ENCODE measurements at regions of chr3 and their contacts with region 1.

Region 1: DNA sequence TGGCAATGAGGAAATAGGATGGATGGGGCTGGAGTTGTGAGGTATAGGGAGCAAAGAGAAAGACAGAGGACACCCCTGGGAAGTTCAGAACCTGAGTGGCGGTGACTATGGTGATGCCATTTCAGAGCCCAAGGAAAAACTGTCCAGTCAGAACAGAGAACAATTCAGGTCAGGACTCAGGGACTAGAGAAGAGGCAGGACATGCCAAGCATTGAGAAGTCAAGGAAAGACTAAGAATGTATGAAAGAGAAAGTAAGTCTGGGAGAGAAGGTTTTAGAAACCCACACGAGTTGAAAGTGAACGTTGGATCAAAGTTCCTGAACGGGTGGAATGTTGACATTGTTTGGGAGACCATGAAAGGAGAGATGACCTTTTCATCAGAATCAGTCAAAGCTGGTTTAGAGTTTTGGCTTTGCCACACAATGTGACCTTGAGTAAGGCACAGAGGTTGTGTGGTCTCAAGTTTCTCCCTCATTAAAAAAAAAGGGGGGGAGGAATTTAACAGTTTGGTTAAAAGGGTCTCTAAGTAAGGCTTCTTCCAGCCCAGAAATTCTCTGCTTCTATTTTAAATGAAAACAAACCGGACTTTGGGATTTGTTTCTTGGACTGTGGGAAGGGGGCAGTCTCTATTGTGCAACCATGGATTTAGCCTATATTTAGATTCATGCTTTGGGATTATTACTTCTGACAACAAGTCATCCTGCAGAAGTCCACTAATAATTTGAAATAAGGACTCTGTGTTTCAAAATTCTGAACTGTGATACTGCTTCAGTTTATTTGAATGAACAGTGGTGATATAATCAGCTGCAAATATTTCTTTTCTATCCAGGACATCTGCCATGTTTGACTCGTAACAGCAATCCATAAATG is 315.9 kb upstream of the TBL1XR1 start:
- DNase-seq: no peak
- ATAC-seq: no peak
- H3K4me3 ChIP-seq: no peak overlapping the region
- H3K4me3 Mint-ChIP-seq: no peak overlapping the region
- H3K27ac ChIP-seq: no peak overlapping the region
- H3K27ac Mint-ChIP-seq: peak overlapping the region in 1 of 9 donors; percentile 4
- H3K4me1 ChIP-seq: no peaks in the 10 kb centered on the region
- H3K4me1 Mint-ChIP-seq: peaks cover 0 to 5% (median 0%) of the 10 kb centered on the region in 7 donors
- H3K27me3 ChIP-seq: no peaks in the 10 kb centered on the region
- H3K27me3 Mint-ChIP-seq: peaks cover 0 to 4% (median 0%) of the 10 kb centered on the region in 5 donors

Region 2: DNA sequence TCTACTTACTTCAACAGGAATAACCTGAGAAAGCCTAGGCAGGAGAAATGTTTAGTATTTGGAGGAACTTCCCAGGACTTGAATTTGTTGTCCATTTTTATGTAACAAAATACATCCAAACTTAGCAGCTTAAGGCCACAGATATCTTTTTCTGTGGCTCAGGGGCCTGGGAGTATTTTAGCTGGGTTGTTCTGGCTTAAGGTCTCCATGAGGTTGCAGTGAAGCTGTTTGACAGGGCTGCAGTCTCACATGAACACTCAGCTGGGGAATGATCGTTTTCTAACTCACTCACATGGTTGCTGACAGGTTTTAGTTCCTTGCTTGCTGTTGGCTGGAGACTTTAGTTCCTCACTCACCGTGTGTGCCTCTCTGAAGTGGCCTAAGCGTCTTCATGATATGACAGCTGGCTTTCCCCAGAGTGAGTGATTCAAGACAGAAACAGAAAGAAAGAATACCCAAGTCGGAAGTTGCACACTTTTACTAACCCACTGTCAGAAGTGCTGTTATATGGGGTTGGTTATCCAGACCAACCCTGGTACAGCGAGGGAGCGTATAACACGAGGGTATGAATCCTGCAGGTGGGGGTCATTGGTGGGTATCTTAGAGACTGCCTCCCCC is 86.2 kb before region 1 on chr3:
- CTCF ChIA-PET with region 1: no interaction called
- POLR2A ChIA-PET with region 1: no interaction called
- intact Hi-C with region 1: loop called in 1 of 2 experiments (anchors 5 kb)
- DNase-seq: peak in 6 of 9 donors; percentile 5 to 50 (median 19)
- ATAC-seq: peak; percentile 88
- H3K4me3 ChIP-seq: peak overlapping the region; percentile 7
- H3K4me3 Mint-ChIP-seq: peak overlapping the region; percentile 14 to 77 (median 47)
- H3K27ac ChIP-seq: no peak overlapping the region
- H3K27ac Mint-ChIP-seq: peak overlapping the region; percentile 3 to 85 (median 52)
- H3K4me1 ChIP-seq: peaks cover 7 to 17% of the 10 kb centered on the region in 2 donors
- H3K4me1 Mint-ChIP-seq: peaks cover 13 to 38% (median 23%) of the 10 kb centered on the region in 7 donors
- H3K27me3 ChIP-seq: no peaks in the 10 kb centered on the region
- H3K27me3 Mint-ChIP-seq: peaks cover 0 to 12% (median 0%) of the 10 kb centered on the region in 5 donors